ENCODE measurements at regions of chr6 and their contacts with region 1.

Region 1: GRCh38 chr6:31882344-31882743 is 3.5 kb upstream of the SLC44A4 start:
- DNase-seq: no peak
- H3K4me3 ChIP-seq: no peak overlapping the region
- H3K27ac ChIP-seq: no peak overlapping the region
- H3K4me1 ChIP-seq: peaks cover 5% of the 10 kb centered on the region
- H3K27me3 ChIP-seq: no peaks in the 10 kb centered on the region
- CTCF ChIP-seq: no peak

Region 2: DNA sequence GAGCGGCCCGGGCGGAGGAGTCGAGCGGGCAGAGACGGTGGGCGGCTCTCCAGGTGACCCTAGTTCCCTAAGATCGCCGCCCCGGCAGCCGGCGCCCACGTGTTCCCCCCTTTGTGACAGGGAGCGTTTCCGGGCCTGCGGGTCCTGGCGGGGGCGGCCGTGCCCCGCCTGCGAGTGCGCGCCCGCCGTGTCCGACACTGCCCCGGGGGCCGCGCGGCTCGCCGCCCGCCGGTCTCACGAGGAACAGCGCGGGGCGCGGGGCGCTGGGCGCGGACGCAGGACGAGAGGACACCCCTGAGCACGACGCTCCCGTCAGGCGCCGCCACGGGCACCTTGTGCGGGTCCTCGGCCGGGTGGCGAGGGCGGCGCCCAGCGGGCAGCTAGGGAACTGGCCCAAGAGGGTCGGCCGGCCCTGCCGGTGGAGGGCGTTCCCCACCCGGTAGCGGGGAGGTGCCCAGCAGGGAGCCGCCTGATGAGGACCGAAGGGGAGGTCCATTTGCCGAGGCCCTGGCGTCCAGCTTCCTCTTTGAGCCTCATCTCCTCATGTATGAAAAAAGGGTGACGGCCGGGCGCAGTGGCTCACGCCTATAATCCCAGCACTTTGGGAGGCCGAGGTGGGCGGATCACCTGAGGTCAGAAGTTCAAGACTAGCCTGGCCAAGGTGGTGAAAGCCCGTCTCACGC is 86.6 kb before region 1 on chr6 and contains the start of gene VARS1:
- intact Hi-C with region 1: no loop called
- DNase-seq: peak; percentile 94
- H3K4me3 ChIP-seq: peak within 1 kb of the TSS; percentile 99
- H3K27ac ChIP-seq: peak within 1 kb of the TSS; percentile 93
- H3K4me1 ChIP-seq: peaks cover 5% of the 10 kb centered on the region
- H3K27me3 ChIP-seq: no peaks in the 10 kb centered on the region
- CTCF ChIP-seq: peak; percentile 70
- total RNA-seq, gene VARS1: 40.8 to 136 TPM

Region 3: GRCh38 chr6:31834434-31835198 is 47.7 kb before region 1 on chr6:
- intact Hi-C with region 1: loop called (anchors 5 kb)
- DNase-seq: peak; percentile 92
- H3K4me3 ChIP-seq: peak overlapping the region; percentile 85
- H3K27ac ChIP-seq: peak overlapping the region; percentile 91
- H3K4me1 ChIP-seq: peaks cover 23% of the 10 kb centered on the region
- H3K27me3 ChIP-seq: no peaks in the 10 kb centered on the region
- CTCF ChIP-seq: no peak

Region 4: GRCh38 chr6:32337186-32337805 is 455.0 kb after region 1 on chr6:
- intact Hi-C with region 1: no loop called
- DNase-seq: no peak
- H3K4me3 ChIP-seq: no peak overlapping the region
- H3K27ac ChIP-seq: no peak overlapping the region
- H3K4me1 ChIP-seq: no peaks in the 10 kb centered on the region
- H3K27me3 ChIP-seq: no peaks in the 10 kb centered on the region
- CTCF ChIP-seq: no peak